Activated CD4-positive, alpha-beta T cell treated with anti-CD3 and anti-CD28 coated beads for 36 hours (primary cell): ENCODE measurements at regions of chr11 and their contacts with region 1.

Region 1: GRCh38 chr11:59615637-59616395 is at the start of gene OSBP:
- DNase-seq: peak; percentile 98
- ATAC-seq: peak; percentile 88
- H3K4me3 Mint-ChIP-seq: peak within 1 kb of the TSS; percentile 99
- H3K27ac Mint-ChIP-seq: peak within 1 kb of the TSS; percentile 96
- H3K4me1 Mint-ChIP-seq: peaks cover 40% of the 10 kb centered on the region
- H3K27me3 Mint-ChIP-seq: no peaks in the 10 kb centered on the region
- total RNA-seq, gene OSBP: 37.9 to 44.2 TPM

Region 2: GRCh38 chr11:59550368-59550841 is 65.4 kb before region 1 on chr11:
- CTCF ChIA-PET with region 1: interaction called, 5 read pairs
- POLR2A ChIA-PET with region 1: interaction called, 5 read pairs
- intact Hi-C with region 1: loop called (anchors 1 kb)
- DNase-seq: peak; percentile 95
- ATAC-seq: peak; percentile 91
- H3K4me3 Mint-ChIP-seq: peak overlapping the region; percentile 79
- H3K27ac Mint-ChIP-seq: peak overlapping the region; percentile 96
- H3K4me1 Mint-ChIP-seq: peaks cover 28% of the 10 kb centered on the region
- H3K27me3 Mint-ChIP-seq: peaks cover 2% of the 10 kb centered on the region

Region 3: GRCh38 chr11:59810189-59810910 is 194.5 kb after region 1 on chr11 and contains the start of gene MRPL16:
- CTCF ChIA-PET with region 1: no interaction called
- POLR2A ChIA-PET with region 1: interaction called, 4 read pairs
- intact Hi-C with region 1: loop called (anchors 1 to 5 kb)
- DNase-seq: peak; percentile 94
- ATAC-seq: peak; percentile 99
- H3K4me3 Mint-ChIP-seq: peak within 1 kb of the TSS; percentile 88
- H3K27ac Mint-ChIP-seq: peak within 1 kb of the TSS; percentile 88
- H3K4me1 Mint-ChIP-seq: peaks cover 18% of the 10 kb centered on the region
- H3K27me3 Mint-ChIP-seq: no peaks in the 10 kb centered on the region
- total RNA-seq, gene MRPL16: 77.9 to 82.6 TPM